GM10248 (cell line): ENCODE measurements at regions of chr5 and their contacts with region 1.

Region 1: DNA sequence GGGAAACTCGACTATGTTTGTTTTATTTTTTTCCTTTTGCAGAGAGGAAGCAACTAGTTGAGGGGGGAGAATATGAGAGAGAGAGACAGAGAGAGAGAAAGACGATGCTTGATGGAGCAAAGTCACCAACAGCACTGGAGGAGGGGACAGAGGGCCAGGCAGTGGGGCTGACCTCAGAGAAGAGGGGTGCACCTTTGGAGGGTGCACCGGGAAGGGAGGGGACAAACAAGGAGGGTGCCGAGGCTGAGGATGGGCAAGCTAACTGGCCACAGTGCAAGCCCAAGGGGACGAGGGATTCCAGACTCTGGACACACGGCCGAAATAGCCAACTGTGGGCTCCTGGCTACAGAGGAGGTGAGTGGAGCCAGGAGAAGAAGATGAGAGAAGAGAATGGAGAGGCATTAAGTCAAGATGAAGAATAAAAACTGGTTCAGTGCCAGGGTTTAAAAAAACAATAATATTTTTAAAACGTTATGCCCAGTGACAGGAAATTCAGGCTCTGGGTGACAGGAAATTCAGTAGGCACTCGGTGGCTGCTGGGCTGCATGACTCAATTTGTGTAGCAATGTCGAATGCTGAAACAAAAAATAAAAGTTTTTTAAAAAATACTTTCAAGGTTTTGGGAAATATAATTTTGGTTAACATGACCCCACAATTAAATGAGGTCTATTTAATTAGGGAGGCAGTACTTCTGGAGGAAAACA is 13.3 kb upstream of the GLRX start:
- DNase-seq: no peak
- CTCF ChIP-seq: no peak

Region 2: GRCh38 chr5:95822542-95823181 is 13.2 kb before region 1 on chr5 and contains the start of gene GLRX:
- CTCF ChIA-PET with region 1: interaction called, 22 read pairs
- POLR2A ChIA-PET with region 1: no interaction called
- DNase-seq: peak; percentile 58
- CTCF ChIP-seq: no peak

Region 3: DNA sequence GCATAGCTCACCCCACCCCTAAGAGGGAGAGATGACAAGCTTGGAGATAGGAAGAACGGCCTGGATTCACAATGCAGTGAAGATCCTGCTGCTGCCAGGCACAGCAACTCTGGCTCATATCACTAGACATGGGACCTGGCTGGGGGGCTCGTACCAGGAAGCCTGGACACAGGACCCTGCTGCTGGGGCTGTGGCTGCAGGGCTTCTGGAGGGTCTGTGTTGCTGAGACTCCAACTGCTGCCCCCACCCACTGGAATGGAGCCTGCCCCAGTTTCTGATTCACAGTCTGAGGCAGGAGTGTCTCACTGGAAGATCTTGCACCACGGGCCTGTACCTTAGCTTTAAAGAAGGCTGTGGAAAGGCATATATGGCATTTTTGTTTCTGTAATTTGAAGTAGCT is 17.7 kb after region 1 on chr5:
- CTCF ChIA-PET with region 1: interaction called, 15 read pairs
- POLR2A ChIA-PET with region 1: no interaction called
- DNase-seq: no peak
- CTCF ChIP-seq: no peak